ENCODE measurements at regions of chr1 and their contacts with region 1.

Region 1: DNA sequence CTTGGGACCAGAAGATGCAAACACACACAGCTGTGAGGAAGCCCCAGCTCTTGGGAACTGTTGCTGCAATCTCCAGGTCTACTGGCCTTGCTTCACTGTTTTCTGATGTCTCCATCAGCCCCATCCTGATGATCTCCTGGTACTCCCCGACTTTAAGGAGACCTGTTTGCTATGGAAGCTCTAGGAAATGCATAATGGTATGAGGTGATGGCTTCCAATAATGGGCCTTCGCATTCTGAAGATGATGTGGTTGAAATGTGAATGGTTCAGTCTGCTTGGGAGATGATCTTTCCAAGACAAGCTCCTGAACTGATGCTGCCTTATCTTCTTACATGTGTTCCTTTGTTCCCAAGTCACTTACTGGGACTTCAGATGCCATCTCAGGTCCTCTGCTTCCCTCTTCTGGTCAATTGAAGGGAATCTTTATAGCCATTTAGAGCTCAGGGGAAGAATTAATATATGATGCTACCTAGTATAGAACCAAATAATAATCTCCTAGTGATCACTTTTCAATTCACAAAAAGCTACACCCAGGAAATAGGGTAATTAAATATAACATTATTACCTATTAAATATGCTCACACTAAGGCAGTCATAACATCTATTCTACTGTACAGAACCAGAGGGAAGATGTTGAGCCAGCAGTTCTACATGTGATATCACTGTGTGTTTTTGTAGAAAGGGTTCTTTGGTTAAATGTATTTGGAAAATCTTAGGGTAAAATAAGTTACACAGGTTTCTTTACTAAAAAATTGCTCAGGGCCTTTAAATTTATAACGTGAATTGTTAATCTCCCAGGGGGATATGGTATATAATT is 73.9 kb upstream of the VTCN1 start:
- DNase-seq: no peak
- ATAC-seq: peak; percentile 49

Region 2: DNA sequence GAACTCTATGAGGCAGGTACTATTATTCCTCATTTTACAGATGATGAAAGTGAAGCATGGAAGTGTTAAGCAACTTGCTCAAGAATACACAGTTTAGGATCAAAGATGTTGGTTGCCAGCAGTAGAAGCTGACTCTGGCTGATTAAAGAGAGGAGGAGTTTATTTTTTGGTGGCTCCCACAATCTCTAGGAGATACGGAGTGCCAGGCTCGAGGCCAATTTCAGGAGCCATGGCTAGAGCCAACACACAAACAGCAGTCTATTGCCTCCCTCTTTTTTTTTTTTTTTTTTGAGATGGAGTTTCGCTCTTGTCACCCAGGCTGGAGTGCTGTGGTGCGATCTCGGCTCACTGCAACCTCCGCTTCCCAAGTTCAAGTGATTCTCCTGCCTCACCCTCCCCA is 204.9 kb before region 1 on chr1:
- intact Hi-C with region 1: loop called (anchors 10 kb)
- DNase-seq: no peak
- ATAC-seq: no peak

Measured in sciatic nerve (tissue), 2 donors.